Activated T-helper 1 cell treated with anti-CD3 and anti-CD28 coated beads, Interleukin-12 subunit alpha, Interleukin-12 subunit beta, Interleukin-2, Interleukin-4 antibody, amounts not matched to agents 30 ng/mL and 10 ng/mL and 1 ng/mL, durations not matched to agents 14 hours and 24 hours and 36 hours (primary cell): ENCODE measurements at regions of chr16 and their contacts with region 1.

Region 1: GRCh38 chr16:74372953-74373846 is 2.9 kb upstream of the NPIPB15 start:
- DNase-seq: no peak
- H3K4me3 Mint-ChIP-seq: no peak overlapping the region
- H3K27ac Mint-ChIP-seq: no peak overlapping the region
- H3K4me1 Mint-ChIP-seq: peaks cover 6% of the 10 kb centered on the region
- H3K27me3 Mint-ChIP-seq: no peaks in the 10 kb centered on the region

Region 2: GRCh38 chr16:74296432-74297144 is 76.6 kb before region 1 on chr16 and contains the start of gene PSMD7:
- intact Hi-C with region 1: loop called (anchors 1 kb)
- DNase-seq: peak; percentile 88
- H3K4me3 Mint-ChIP-seq: peak within 1 kb of the TSS; percentile 90
- H3K27ac Mint-ChIP-seq: peak within 1 kb of the TSS; percentile 93
- H3K4me1 Mint-ChIP-seq: peaks cover 27% of the 10 kb centered on the region
- H3K27me3 Mint-ChIP-seq: no peaks in the 10 kb centered on the region
- total RNA-seq, gene PSMD7: 168 and 175 TPM in 2 replicates

Region 3: GRCh38 chr16:74320707-74321106 is 52.5 kb before region 1 on chr16:
- intact Hi-C with region 1: no loop called
- DNase-seq: no peak
- H3K4me3 Mint-ChIP-seq: no peak overlapping the region
- H3K27ac Mint-ChIP-seq: no peak overlapping the region
- H3K4me1 Mint-ChIP-seq: no peaks in the 10 kb centered on the region
- H3K27me3 Mint-ChIP-seq: no peaks in the 10 kb centered on the region

Region 4: DNA sequence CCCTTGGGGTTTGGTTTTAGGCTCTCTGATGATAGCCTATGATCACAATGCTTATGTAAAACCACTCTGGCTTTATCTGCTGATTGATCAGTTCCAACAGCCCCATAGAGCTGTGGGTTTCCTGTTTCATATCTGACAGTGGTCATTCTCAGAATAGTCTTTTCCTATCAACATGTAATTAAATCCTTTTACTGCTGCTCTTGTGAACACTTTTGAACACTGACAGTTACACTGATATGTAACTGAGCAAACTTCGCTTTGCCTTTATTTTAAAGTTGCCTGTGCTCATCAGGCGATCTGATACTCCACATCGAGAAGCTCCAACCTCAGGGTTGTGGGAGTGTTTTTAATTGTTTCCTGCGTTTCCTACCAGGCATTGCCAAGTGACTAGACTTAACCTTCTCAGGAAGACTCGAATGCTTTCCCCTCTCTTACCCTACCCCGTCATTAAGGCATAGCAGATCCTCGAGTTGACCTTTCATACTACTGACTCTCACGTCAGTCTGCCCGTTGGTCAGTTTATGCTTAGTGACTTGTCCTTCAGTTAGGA is 65.4 kb after region 1 on chr16:
- intact Hi-C with region 1: loop called (anchors 5 kb)
- DNase-seq: peak; percentile 8
- H3K4me3 Mint-ChIP-seq: peak overlapping the region; percentile 58
- H3K27ac Mint-ChIP-seq: peak overlapping the region; percentile 70
- H3K4me1 Mint-ChIP-seq: peaks cover 18% of the 10 kb centered on the region
- H3K27me3 Mint-ChIP-seq: no peaks in the 10 kb centered on the region

Region 5: GRCh38 chr16:74695450-74696422 is 322.5 kb after region 1 on chr16:
- intact Hi-C with region 1: loop called (anchors 5 kb)
- DNase-seq: peak; percentile 66
- H3K4me3 Mint-ChIP-seq: peak overlapping the region; percentile 84
- H3K27ac Mint-ChIP-seq: peak overlapping the region; percentile 70
- H3K4me1 Mint-ChIP-seq: peaks cover 50% of the 10 kb centered on the region
- H3K27me3 Mint-ChIP-seq: no peaks in the 10 kb centered on the region

Region 6: GRCh38 chr16:74984535-74985296 is 611.5 kb after region 1 on chr16 and contains the start of gene WDR59:
- intact Hi-C with region 1: loop called (anchors 5 kb)
- DNase-seq: peak; percentile 99
- H3K4me3 Mint-ChIP-seq: peak within 1 kb of the TSS; percentile 90
- H3K27ac Mint-ChIP-seq: peak within 1 kb of the TSS; percentile 90
- H3K4me1 Mint-ChIP-seq: peaks cover 14% of the 10 kb centered on the region
- H3K27me3 Mint-ChIP-seq: peaks cover 3% of the 10 kb centered on the region
- total RNA-seq, gene WDR59: 85.9 and 95.3 TPM in 2 replicates